ENCODE measurements at regions of chr3 and their contacts with region 1.

Region 1: DNA sequence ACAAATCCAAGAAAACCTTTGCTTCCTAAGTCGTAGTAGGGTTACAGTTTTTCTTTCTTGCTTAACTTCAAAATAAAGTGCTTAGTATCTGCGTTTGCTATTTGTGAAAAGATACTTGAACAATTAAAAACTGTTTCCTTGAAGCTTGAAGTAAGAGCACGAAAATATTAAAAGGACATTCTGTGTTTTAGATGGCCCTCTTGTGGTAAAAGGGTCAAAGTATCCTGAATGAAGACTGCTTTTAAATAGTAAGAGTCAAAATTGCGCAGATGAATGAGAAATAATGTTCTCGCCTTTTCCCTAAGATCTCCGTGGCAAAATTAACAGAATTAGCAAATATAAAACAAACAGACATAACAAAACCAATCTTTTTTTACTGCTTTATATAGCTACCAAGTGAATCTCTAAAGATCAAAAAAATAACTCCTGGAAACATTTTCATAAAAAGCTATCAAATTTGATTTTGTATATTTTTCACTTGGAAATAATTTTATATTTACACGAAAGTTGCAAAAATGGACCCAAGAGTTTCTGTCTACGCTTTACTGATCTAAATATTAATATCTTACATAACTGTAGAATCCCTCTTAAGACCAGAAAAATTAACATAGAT is 175.4 kb downstream of the MBNL1 start:
- DNase-seq: no peak
- ATAC-seq: peak in 7 of 8 donors; percentile 53 to 84 (median 70)
- H3K4me3 ChIP-seq: no peak overlapping the region
- H3K27ac ChIP-seq: peak overlapping the region in 4 of 10 donors; percentile 2 to 34 (median 22)
- H3K4me1 ChIP-seq: peaks cover 0 to 77% (median 44%) of the 10 kb centered on the region in 9 donors
- H3K27me3 ChIP-seq: no peaks in the 10 kb centered on the region
- CTCF ChIP-seq: peak; percentile 48 to 85 (median 66)

Region 2: GRCh38 chr3:152071924-152072323 is 372.2 kb before region 1 on chr3:
- intact Hi-C with region 1: loop called in 6 of 10 experiments (anchors 5 to 10 kb)
- DNase-seq: no peak
- ATAC-seq: peak in 4 of 8 donors; percentile 58 to 75 (median 60)
- H3K4me3 ChIP-seq: no peak overlapping the region
- H3K27ac ChIP-seq: no peak overlapping the region
- H3K4me1 ChIP-seq: peaks cover 0 to 7% (median 0%) of the 10 kb centered on the region in 9 donors
- H3K27me3 ChIP-seq: no peaks in the 10 kb centered on the region
- CTCF ChIP-seq: peak in 8 of 9 donors; percentile 12 to 66 (median 56)

Region 3: DNA sequence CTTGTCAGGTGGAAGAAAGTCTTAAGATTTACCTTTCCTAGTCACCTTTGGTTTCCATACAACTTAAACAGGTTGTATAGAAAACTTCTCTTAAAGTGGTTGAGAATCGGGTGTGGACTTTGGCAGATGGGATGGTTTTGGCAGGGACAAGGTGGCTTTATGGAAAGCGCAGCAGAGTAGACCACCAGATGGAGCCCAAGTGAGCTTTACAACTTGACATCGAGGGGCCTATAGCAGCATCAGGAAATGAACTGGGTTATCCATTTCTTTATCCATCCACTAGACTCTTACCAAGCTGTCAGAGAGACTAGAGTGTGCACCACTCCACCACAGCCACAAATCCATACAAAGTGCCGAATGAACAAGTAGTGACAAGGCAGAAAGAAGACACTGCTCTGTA is 260.7 kb before region 1 on chr3:
- intact Hi-C with region 1: loop called in 9 of 10 experiments (anchors 2 to 10 kb)
- DNase-seq: peak in 1 of 2 donors; percentile 54
- ATAC-seq: peak in 6 of 8 donors; percentile 29 to 79 (median 75)
- H3K4me3 ChIP-seq: no peak overlapping the region
- H3K27ac ChIP-seq: no peak overlapping the region
- H3K4me1 ChIP-seq: peaks cover 0 to 6% (median 0%) of the 10 kb centered on the region in 9 donors
- H3K27me3 ChIP-seq: no peaks in the 10 kb centered on the region
- CTCF ChIP-seq: peak; percentile 20 to 77 (median 68)

Region 4: GRCh38 chr3:152222327-152222726 is 221.8 kb before region 1 on chr3:
- intact Hi-C with region 1: loop called in 2 of 10 experiments (anchors 10 kb)
- DNase-seq: no peak
- ATAC-seq: peak in 7 of 8 donors; percentile 58 to 79 (median 73)
- H3K4me3 ChIP-seq: no peak overlapping the region
- H3K27ac ChIP-seq: peak overlapping the region in 7 of 10 donors; percentile 22 to 68 (median 55)
- H3K4me1 ChIP-seq: peaks cover 0 to 49% (median 7%) of the 10 kb centered on the region in 9 donors
- H3K27me3 ChIP-seq: no peaks in the 10 kb centered on the region
- CTCF ChIP-seq: no peak

Region 5: GRCh38 chr3:152349392-152349791 is 94.7 kb before region 1 on chr3:
- intact Hi-C with region 1: loop called in 1 of 10 experiments (anchors 10 kb)
- DNase-seq: no peak
- ATAC-seq: no peak
- H3K4me3 ChIP-seq: no peak overlapping the region
- H3K27ac ChIP-seq: peak overlapping the region in 3 of 10 donors; percentile 0 to 25 (median 23)
- H3K4me1 ChIP-seq: peaks cover 0 to 92% (median 75%) of the 10 kb centered on the region in 9 donors
- H3K27me3 ChIP-seq: no peaks in the 10 kb centered on the region
- CTCF ChIP-seq: no peak

Region 6: GRCh38 chr3:152405915-152406802 is 38.0 kb before region 1 on chr3:
- intact Hi-C with region 1: no loop called
- DNase-seq: no peak
- ATAC-seq: peak; percentile 24 to 74 (median 56)
- H3K4me3 ChIP-seq: peak overlapping the region in 3 of 10 donors; percentile 15 to 17 (median 15)
- H3K27ac ChIP-seq: peak overlapping the region; percentile 36 to 85 (median 77)
- H3K4me1 ChIP-seq: peaks cover 0 to 82% (median 69%) of the 10 kb centered on the region in 9 donors
- H3K27me3 ChIP-seq: no peaks in the 10 kb centered on the region
- CTCF ChIP-seq: no peak

Region 7: GRCh38 chr3:152564459-152564858 is 120.3 kb after region 1 on chr3:
- intact Hi-C with region 1: no loop called
- DNase-seq: no peak
- ATAC-seq: peak in 3 of 8 donors; percentile 60 to 75 (median 64)
- H3K4me3 ChIP-seq: no peak overlapping the region
- H3K27ac ChIP-seq: peak overlapping the region in 7 of 10 donors; percentile 2 to 61 (median 42)
- H3K4me1 ChIP-seq: peaks cover 0 to 14% (median 10%) of the 10 kb centered on the region in 9 donors
- H3K27me3 ChIP-seq: no peaks in the 10 kb centered on the region
- CTCF ChIP-seq: no peak

Region 8: GRCh38 chr3:152870027-152870426 is 425.9 kb after region 1 on chr3:
- intact Hi-C with region 1: no loop called
- DNase-seq: no peak
- ATAC-seq: peak in 1 of 8 donors; percentile 70
- H3K4me3 ChIP-seq: no peak overlapping the region
- H3K27ac ChIP-seq: peak overlapping the region in 1 of 10 donors; percentile 23
- H3K4me1 ChIP-seq: no peaks in the 10 kb centered on the region
- H3K27me3 ChIP-seq: no peaks in the 10 kb centered on the region
- CTCF ChIP-seq: no peak

Measured in heart right ventricle (tissue), 16 donors.